ENCODE measurements at regions of chr2 and their contacts with region 1.

Region 1: DNA sequence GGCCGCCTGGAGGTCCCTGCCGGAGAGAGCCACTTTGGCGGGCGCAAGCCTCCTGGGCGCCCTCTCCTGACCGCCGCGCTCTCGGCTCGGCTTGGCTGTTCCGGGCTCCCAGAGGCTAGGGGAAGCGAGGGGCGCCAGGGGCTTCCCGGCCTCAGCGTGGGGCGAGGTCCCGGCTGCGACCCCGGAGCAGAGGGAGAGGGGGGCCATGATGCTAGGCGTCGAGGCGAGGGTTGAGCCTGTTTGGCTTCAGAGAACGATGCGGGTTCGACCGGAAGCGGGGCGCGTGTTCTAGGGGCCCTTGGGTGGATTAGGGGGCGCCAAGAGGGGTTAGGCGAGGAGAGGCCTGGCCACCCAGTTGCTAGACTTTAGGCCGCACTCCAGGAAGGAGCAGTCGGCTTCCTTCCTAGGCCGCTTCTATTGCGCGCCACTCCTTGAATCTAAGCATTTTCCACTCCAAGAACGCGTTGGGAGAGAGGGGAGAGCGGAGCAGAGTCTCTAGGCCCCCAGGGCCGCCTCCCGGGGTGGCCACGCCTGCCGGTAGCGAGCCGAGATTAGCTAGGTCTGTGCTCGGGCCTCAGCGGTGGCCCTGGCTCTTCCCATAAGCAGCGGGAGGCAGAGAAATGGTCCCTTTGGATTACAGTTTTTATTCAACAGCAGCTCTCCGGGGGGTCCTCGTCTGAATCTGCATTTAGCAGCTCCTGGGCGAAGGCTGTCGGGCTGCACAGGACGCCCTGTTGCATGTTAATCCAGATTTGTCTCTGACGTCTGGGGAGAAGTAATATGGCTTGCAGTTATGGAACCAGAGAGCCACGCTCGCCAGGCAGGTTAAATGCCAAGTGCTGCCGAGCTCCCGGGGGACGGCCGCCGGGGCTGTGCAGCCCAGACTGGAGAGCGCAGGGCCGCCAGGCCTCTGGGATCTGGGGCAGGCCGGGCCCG is 11.3 kb downstream of the MEIS1 start:
- DNase-seq: no peak
- H3K4me3 ChIP-seq: peak overlapping the region; percentile 70
- CTCF ChIP-seq: peak; percentile 46

Region 2: DNA sequence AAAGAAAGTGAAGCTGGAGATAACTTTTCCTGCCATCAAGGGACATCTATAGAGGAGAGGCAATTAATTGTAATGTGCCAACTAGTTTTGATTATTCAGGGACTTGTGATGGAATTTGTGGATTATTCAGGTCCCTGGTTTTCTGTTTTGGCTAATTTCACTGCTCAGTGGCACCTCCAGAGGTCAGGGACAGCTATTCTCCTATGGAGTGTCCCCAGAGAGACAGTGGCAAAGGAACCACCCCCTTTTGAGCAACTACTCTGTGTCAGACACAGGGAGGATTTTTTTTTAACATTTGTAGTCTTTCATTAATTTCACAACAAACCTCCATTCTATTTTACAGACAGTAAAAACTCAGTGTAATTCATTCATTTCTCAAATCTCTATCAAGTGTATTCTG is 807.8 kb before region 1 on chr2:
- in situ Hi-C with region 1: loop called (anchors 5 kb)
- DNase-seq: no peak
- H3K4me3 ChIP-seq: no peak overlapping the region
- CTCF ChIP-seq: peak; percentile 16

Region 3: DNA sequence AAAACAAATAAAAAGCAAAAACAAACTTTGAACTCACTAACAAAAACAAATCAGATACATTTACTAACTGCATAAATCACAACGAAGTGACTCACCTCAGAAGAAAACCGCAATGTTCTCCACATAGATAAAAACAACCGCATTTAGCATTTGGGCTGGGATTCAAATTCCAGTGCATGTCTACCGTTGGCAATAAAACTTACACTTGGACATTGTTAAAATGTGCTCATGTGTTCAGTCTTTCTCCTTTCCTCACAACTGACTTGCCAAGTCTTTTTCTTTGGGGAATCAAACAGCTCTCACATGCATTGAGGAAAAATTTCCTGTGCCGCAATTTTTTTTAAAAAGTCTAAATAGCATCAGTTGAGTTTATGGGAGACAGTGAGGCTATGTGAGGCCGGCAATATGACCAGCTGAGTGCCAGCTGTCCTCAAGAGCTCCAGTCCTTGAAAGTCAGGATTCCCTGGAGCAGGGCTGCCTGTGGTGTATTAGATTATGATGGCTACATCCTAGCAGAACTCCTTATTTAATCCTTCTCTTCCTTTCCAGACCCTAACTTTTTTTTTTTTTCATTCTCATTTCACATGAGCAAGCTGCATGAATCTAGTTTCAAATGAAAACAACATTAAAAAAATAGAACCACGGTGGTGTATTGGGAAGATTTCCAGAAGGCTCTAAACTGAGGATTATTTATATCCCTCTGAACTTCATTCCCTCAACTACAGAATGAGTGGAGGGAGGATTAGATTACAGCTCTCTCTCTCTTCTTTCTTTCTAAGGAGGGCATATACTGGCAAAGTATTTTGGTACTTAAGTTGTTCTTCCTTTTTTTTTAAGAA is 81.5 kb before region 1 on chr2:
- in situ Hi-C with region 1: no loop called
- DNase-seq: peak; percentile 98
- H3K4me3 ChIP-seq: no peak overlapping the region
- CTCF ChIP-seq: no peak

Region 4: DNA sequence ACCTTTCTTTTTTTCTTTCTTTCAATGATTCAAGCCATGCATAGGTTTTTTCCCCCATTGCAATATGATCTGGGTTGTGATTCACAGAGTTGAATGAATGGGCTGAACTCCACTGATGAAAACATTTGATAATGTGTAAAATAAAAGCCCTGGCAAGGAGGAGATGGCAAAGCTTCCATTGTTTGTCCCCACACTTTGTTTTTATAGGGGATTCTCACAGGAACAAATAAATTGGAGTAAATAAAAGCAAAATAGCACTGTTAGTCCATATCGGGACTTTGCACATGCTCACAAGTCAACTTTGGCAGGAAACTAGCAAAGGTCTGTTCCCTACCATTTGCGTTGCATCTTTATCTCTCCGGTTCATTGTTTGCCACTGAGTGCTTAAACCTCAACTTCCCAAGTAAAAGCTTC is 44.4 kb after region 1 on chr2:
- in situ Hi-C with region 1: no loop called
- DNase-seq: no peak
- H3K4me3 ChIP-seq: no peak overlapping the region
- CTCF ChIP-seq: no peak

Region 5: GRCh38 chr2:66555501-66556324 is 109.5 kb after region 1 on chr2:
- in situ Hi-C with region 1: loop called (anchors 5 kb)
- DNase-seq: no peak
- H3K4me3 ChIP-seq: peak overlapping the region; percentile 1
- CTCF ChIP-seq: no peak

Region 6: DNA sequence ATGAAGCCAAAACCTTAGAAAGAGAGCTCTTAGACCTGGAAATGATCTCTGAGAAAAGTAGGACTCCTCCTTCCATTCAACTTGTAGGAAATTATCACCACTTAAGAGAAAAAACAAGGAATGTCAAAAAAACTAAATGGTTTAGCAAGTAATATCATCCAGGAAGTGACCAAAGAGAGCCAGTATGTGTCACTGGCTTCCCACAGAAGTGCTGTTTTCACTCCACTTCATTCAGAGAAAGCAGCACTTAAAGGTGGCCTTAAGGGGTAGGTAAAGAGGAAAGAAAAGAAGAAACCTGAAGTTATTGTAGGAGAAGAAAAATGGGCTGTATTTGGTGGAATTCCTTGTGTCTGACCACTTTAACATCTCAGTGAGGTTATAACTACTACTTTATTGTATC is 536.6 kb after region 1 on chr2:
- in situ Hi-C with region 1: loop called (anchors 10 kb)
- DNase-seq: no peak
- H3K4me3 ChIP-seq: no peak overlapping the region
- CTCF ChIP-seq: no peak

Region 7: GRCh38 chr2:67631483-67631882 is 1185.3 kb after region 1 on chr2:
- in situ Hi-C with region 1: loop called (anchors 10 kb)
- DNase-seq: peak; percentile 44
- H3K4me3 ChIP-seq: no peak overlapping the region
- CTCF ChIP-seq: no peak

Region 8: DNA sequence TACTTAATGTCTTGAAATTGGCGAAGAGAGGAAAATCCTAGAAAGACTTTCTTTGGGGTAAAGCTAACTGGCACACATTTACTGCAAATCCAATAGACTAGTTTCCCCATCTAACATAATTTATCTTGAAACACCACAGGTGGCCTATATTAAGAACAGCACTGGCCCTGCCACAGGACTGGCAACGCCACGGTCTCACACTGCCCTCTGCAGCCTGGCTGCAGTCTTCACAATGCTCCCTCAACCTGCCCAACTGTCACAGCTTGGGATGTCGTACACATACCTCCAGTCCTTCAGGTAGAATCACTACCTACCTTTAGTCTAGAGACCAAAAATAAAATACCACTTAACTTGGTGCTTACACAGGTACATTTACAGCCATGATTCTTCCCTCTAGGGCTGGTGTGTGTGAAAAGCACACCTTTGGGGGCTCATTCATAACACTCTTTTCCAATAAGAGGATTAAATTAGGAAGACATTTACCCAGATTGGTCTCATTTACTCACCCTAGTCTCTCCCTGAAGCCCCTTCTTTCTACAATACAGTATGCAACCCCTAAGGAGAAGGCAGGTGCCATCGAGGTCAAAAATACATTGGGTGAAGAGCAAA is 1394.4 kb after region 1 on chr2:
- in situ Hi-C with region 1: loop called (anchors 5 kb)
- DNase-seq: peak; percentile 51
- H3K4me3 ChIP-seq: no peak overlapping the region
- CTCF ChIP-seq: peak; percentile 93